ENCODE measurements at regions of chr14 and their contacts with region 1.

Region 1: GRCh38 chr14:75720842-75721498 is 59.9 kb downstream of the TTLL5 start:
- DNase-seq: no peak
- ATAC-seq: no peak
- H3K4me3 ChIP-seq: no peak overlapping the region
- H3K27ac ChIP-seq: no peak overlapping the region
- H3K4me1 ChIP-seq: peaks cover 6% of the 10 kb centered on the region
- H3K27me3 ChIP-seq: no peaks in the 10 kb centered on the region
- CTCF ChIP-seq: no peak
- EP300 ChIP-seq: no peak
- POLR2A ChIP-seq: no peak
- RAD21 ChIP-seq: no peak

Region 2: DNA sequence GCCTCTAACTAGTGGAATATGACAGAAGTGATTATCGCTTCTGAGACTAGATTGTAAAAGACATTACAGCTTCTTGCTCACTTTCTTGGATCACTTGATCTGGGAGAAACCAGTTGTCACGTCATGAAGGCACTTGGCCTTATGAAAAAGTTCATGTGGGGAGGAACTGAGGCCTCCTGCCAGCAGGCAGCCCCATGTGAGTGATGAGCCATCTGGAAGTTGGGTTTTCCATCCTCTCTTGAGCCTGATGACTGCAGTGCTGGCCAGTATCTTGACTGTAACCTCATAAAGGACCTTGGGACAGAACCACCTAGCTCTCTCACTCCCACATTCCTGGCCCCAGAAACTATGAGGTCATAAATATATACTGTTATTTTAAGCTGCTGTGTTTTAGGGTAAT is 32.0 kb before region 1 on chr14:
- CTCF ChIA-PET with region 1: no interaction called
- POLR2A ChIA-PET with region 1: no interaction called
- RAD21 ChIA-PET with region 1: no interaction called
- SMC1A ChIA-PET with region 1: no interaction called
- in situ Hi-C with region 1: no loop called
- intact Hi-C with region 1: no loop called
- DNase-seq: no peak
- ATAC-seq: no peak
- H3K4me3 ChIP-seq: no peak overlapping the region
- H3K27ac ChIP-seq: no peak overlapping the region
- H3K4me1 ChIP-seq: no peaks in the 10 kb centered on the region
- H3K27me3 ChIP-seq: no peaks in the 10 kb centered on the region
- CTCF ChIP-seq: no peak
- EP300 ChIP-seq: no peak
- POLR2A ChIP-seq: no peak
- RAD21 ChIP-seq: no peak

Region 3: DNA sequence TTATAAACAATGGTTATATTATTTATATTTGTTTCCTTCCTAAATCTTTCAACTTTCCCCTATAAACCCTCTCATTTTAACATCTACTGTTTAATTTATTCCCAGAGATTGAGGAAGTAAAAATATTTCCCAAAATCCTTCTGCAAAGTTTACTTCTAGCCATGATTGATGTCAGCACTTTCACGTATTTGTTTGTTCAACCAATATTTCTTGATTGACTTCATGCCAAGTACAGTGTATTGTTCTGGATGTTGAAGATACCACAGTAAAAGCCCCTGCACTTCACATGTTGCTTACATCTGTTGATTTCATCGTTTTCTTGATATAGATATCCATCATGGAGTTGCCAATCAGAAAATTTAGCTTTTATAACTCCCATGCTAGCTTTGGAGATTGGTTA is 21.9 kb after region 1 on chr14:
- CTCF ChIA-PET with region 1: no interaction called
- POLR2A ChIA-PET with region 1: no interaction called
- RAD21 ChIA-PET with region 1: no interaction called
- SMC1A ChIA-PET with region 1: no interaction called
- in situ Hi-C with region 1: no loop called
- intact Hi-C with region 1: no loop called
- DNase-seq: no peak
- ATAC-seq: no peak
- H3K4me3 ChIP-seq: no peak overlapping the region
- H3K27ac ChIP-seq: no peak overlapping the region
- H3K4me1 ChIP-seq: no peaks in the 10 kb centered on the region
- H3K27me3 ChIP-seq: no peaks in the 10 kb centered on the region
- CTCF ChIP-seq: no peak
- EP300 ChIP-seq: no peak
- POLR2A ChIP-seq: no peak
- RAD21 ChIP-seq: no peak

Region 4: DNA sequence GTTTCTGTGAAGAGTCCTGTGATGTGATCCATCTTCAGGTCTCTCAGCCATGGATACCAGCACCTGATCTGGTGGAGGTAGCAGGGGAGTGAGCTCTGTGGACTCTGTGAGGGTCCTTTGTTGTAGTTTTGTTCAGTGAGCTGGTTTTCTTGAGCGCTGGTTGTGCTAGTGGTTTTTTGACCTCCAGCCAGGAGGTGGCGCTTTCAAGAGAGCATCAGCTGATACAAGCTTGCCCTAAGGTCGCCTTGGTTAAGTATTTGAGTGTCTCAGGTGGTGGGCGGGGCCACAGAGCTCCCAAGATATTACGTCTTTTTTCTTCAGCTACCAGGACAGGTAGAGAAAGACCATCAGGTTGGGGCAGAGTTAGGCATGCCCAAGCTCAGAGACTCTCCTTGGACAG is 79.8 kb after region 1 on chr14:
- CTCF ChIA-PET with region 1: no interaction called
- POLR2A ChIA-PET with region 1: interaction called, 11 read pairs
- RAD21 ChIA-PET with region 1: no interaction called
- SMC1A ChIA-PET with region 1: interaction called, 3 read pairs
- in situ Hi-C with region 1: no loop called
- intact Hi-C with region 1: no loop called
- DNase-seq: no peak
- ATAC-seq: peak; percentile 23; the same call in 1 of the 3 replicates
- H3K4me3 ChIP-seq: no peak overlapping the region
- H3K27ac ChIP-seq: no peak overlapping the region
- H3K4me1 ChIP-seq: no peaks in the 10 kb centered on the region
- H3K27me3 ChIP-seq: no peaks in the 10 kb centered on the region
- CTCF ChIP-seq: no peak
- EP300 ChIP-seq: no peak
- POLR2A ChIP-seq: no peak
- RAD21 ChIP-seq: no peak

Region 5: DNA sequence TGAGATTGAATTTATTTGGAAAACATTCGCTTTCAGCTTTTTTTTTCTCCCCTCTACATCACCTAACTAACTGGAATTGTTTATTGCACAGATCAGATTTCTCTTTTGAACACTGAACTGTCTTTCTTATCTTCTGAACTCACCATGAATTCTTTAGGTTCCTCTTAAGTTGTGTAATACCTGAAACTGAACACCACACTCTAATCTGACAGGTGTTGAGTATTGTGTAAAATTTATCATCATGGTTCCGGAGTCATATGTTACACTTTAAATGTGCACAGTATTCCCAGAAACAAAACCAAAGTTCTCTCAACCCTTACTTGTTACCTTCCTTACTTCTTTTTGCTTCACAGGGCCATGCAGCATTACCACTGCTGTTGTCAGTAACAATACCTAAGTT is 194.1 kb after region 1 on chr14:
- CTCF ChIA-PET with region 1: no interaction called
- POLR2A ChIA-PET with region 1: no interaction called
- RAD21 ChIA-PET with region 1: no interaction called
- SMC1A ChIA-PET with region 1: no interaction called
- in situ Hi-C with region 1: no loop called
- intact Hi-C with region 1: no loop called
- DNase-seq: no peak
- ATAC-seq: no peak
- H3K4me3 ChIP-seq: no peak overlapping the region
- H3K27ac ChIP-seq: no peak overlapping the region
- H3K4me1 ChIP-seq: peaks cover 9% of the 10 kb centered on the region
- H3K27me3 ChIP-seq: no peaks in the 10 kb centered on the region
- CTCF ChIP-seq: no peak
- EP300 ChIP-seq: no peak
- POLR2A ChIP-seq: no peak
- RAD21 ChIP-seq: no peak